Sciatic nerve (tissue), 2 donors: ENCODE measurements at regions of chr14 and their contacts with region 1.

Region 1: DNA sequence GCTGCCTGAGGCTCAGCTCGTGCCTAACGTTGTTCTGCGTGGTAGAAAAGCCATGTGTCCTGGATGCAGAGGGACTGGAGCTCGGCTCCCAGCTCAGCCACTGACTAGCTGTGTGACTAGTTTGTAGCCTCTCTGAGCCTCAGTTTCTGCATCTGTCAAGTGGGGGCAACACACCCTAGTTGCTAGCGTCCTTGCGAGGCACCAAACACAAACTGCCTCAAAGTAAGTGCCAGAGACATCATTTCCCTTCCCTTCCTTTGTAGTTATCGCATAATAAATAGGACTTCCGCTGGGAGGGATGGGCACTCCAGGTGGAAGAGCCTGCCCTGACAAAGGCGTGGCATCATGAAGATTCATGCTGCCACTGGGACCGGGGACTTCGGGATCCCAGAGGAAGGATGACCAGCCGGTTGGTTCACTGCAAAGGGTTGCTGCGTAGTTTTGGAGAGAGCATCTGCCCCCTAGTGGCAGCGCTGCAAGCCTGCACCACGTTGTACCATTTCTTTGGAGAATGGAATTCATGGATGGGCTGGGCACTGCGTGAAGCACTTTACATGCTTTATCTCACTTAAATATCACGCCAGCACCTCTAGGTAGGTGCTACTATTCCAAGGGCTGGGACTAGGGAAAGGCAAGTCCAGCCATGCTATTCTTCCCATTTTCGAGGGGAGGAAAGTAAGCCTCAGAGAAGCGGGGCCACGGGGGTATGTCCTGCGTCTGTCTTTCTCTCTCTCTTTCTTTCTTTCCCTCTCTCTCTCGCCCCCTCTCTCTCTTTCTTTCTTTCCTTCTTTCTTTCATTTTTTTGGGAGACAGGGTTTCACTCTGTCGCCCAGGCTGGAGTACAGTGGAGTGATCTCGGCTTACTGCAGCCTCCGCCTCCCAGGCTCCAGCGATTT is 4.6 kb downstream of the CCDC197 start:
- DNase-seq: peak; percentile 67
- ATAC-seq: peak; percentile 86

Region 2: GRCh38 chr14:93939304-93940229 is 62.2 kb before region 1 on chr14:
- intact Hi-C with region 1: loop called (anchors 5 kb)
- DNase-seq: peak; percentile 89
- ATAC-seq: peak; percentile 86